ENCODE measurements at regions of chr2 and their contacts with region 1.

Region 1: GRCh38 chr2:74587664-74588277 is 33.3 kb downstream of the DOK1 start:
- DNase-seq: peak; percentile 76 to 80
- H3K4me3 ChIP-seq: no peak overlapping the region
- H3K27ac ChIP-seq: no peak overlapping the region
- H3K4me1 ChIP-seq: peaks cover 0 to 13% (median 5%) of the 10 kb centered on the region in 4 donors
- H3K27me3 ChIP-seq: peaks cover 0 to 28% of the 10 kb centered on the region in 2 donors
- CTCF ChIP-seq: peak; percentile 66 to 77

Region 2: DNA sequence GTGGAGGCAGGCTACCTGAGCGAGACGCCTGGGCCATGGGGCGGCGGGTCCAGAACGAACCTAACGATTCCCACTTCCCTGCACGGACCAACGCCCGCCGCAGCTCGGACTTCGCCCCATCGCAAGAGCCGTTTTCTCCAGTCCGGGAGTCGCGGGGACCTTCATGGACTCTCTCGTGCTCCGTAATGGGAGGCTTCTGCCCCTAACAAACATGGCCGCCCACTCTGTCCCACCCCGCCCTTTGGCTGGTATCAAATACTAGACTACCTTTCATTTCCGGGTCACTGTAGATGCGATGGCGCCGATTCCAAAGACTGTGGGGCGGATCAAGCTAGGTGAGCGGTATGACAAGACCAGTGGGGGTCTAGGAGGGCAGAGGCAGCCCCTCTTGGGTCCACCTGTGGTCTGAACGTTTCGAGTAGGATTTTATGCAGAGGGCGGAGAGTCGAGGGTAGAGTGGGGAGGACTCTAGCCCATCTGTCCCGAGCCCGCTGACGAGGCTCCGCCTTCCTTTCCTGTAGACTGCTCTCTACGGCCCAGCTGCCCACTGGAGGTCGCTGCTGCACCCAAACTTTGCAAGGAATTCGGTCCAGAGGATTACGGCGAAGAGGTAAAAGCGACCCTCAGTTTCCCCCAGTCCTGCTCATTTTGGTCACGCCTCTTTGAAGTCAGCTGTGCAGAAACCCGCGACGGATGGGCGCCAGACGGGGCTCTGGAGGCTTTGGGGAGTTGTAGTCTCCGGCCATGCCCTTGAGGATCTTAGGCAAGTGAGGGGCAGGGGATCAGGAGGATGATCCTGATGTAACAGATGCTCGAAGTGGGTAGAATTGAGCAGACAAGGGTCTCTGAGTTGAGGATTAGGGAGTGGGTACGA is 104.7 kb before region 1 on chr2 and contains the starts of genes CCDC142 and TTC31:
- intact Hi-C with region 1: loop called (anchors 1 kb)
- DNase-seq: peak; percentile 98 to 99
- H3K4me3 ChIP-seq: peak within 1 kb of the TSS; percentile 84 to 86
- H3K27ac ChIP-seq: peak within 1 kb of the TSS; percentile 83 to 95
- H3K4me1 ChIP-seq: peaks cover 0 to 35% (median 26%) of the 10 kb centered on the region in 4 donors
- H3K27me3 ChIP-seq: no peaks in the 10 kb centered on the region
- CTCF ChIP-seq: peak; percentile 79 to 88

Region 3: GRCh38 chr2:74529357-74530238 is 58.2 kb before region 1 on chr2 and contains the starts of genes AUP1 and HTRA2:
- intact Hi-C with region 1: loop called (anchors 5 kb)
- DNase-seq: peak; percentile 98 to 99
- H3K4me3 ChIP-seq: peak within 1 kb of the TSS; percentile 78 to 98
- H3K27ac ChIP-seq: peak within 1 kb of the TSS; percentile 86
- H3K4me1 ChIP-seq: peaks cover 0 to 28% (median 25%) of the 10 kb centered on the region in 4 donors
- H3K27me3 ChIP-seq: no peaks in the 10 kb centered on the region
- CTCF ChIP-seq: peak in 1 of 2 experiments; percentile 26

Region 4: DNA sequence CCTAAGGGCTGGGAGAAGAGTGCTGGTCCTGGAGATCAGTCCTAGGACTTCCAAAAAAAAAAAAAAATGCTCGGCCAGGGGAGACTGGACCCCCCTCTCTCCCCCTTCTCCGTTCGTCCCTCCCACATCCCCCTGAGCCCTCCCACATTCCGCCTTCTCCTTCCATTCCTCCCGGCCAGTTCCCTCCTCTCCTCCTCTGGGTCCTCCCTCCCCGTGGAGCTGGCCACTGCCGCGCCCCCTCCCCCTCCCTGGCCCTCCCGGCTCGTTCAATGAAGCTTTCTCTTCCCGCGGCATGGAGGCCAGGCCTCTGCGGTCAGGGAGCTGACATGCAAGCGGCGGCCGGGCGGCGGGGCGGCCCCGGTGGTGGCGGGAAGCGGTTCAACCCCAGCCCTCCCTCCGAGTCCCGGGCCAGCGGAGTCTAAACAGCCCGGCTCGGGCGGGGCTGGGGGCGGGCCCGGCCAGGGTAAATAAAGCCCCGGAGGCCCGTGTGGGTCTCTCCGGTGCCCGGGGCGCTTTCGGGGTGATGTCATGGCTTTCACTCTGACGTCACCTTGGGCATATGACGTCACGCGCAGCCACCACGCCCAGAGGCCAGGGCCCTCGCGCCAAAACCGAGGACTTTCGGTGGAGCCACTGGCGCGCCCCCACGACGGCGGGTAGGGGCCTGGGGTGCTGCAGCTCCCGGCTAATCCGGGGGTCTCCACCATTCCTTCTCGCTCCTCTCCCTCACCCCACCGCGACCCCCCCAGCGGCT is 33.7 kb before region 1 on chr2 and contains the start of gene LOXL3:
- intact Hi-C with region 1: loop called (anchors 5 kb)
- DNase-seq: peak; percentile 83 to 94
- H3K4me3 ChIP-seq: peak within 1 kb of the TSS; percentile 66 to 92
- H3K27ac ChIP-seq: peak within 1 kb of the TSS; percentile 84 to 91
- H3K4me1 ChIP-seq: peaks cover 0 to 29% (median 25%) of the 10 kb centered on the region in 4 donors
- H3K27me3 ChIP-seq: no peaks in the 10 kb centered on the region
- CTCF ChIP-seq: peak in 1 of 2 experiments; percentile 14